Left ventricle myocardium inferior (tissue), 1 donor: ENCODE measurements at regions of chr1 and their contacts with region 1.

Region 1: GRCh38 chr1:56189946-56190792 is 389.2 kb downstream of the PLPP3 start:
- DNase-seq: no peak
- H3K4me3 ChIP-seq: no peak overlapping the region
- H3K27ac ChIP-seq: peak overlapping the region; percentile 71
- H3K4me1 ChIP-seq: peaks cover 26% of the 10 kb centered on the region
- H3K27me3 ChIP-seq: no peaks in the 10 kb centered on the region
- CTCF ChIP-seq: peak; percentile 63

Region 2: DNA sequence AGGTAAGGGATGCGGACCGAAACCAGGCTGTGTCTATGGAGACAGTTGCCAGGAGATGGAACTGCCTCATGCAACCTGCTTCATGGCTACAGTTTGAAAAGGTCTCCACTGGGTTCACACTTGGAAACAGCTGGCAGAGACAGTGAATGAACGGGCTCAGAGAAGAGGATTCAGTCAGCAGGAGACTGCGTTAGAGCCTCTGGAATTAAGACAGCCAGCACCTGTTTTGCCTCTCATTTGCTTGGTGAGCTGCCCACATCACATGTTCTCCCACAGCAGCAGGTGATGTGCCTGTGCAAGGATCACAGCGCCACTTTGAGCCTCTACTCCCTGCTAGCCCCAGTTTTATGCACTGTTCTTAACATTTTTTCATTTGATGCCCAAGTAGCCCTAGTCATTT is 68.2 kb after region 1 on chr1:
- intact Hi-C with region 1: no loop called
- DNase-seq: no peak
- H3K4me3 ChIP-seq: no peak overlapping the region
- H3K27ac ChIP-seq: no peak overlapping the region
- H3K4me1 ChIP-seq: peaks cover 41% of the 10 kb centered on the region
- H3K27me3 ChIP-seq: no peaks in the 10 kb centered on the region
- CTCF ChIP-seq: no peak

Region 3: DNA sequence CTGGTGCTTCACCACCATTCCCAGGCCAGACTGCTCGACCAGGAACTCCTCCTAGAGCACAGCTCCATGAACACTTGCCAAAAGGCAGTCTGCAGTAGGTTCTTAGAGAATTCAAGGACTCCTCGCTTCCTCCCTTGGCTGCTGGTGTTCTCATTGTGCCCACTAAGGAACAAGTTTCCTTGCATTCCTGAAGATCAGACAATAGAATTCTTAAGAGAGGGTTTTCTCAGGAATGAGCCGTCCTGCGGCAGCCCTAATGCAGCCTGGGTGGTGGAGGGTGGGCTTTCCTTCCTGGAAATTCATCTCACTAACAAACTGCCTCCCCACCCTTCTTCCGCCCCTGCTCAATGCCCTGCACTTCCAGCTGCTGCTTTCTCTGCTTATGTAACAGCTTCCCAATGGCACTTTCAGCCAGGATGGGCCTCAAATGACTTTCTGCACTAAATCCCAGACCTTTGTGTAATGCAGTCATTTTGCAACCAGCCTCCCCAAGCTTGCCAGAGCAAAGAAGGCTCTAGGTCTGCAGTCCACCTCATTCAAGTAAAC is 101.3 kb after region 1 on chr1:
- intact Hi-C with region 1: loop called (anchors 5 kb)
- DNase-seq: peak; percentile 62
- H3K4me3 ChIP-seq: no peak overlapping the region
- H3K27ac ChIP-seq: peak overlapping the region; percentile 76
- H3K4me1 ChIP-seq: peaks cover 39% of the 10 kb centered on the region
- H3K27me3 ChIP-seq: no peaks in the 10 kb centered on the region
- CTCF ChIP-seq: no peak

Region 4: GRCh38 chr1:56578963-56579875 is 389.1 kb after region 1 on chr1 and contains the start of gene PLPP3:
- intact Hi-C with region 1: loop called (anchors 10 kb)
- DNase-seq: peak; percentile 87
- H3K4me3 ChIP-seq: peak within 1 kb of the TSS; percentile 88
- H3K27ac ChIP-seq: peak within 1 kb of the TSS; percentile 97
- H3K4me1 ChIP-seq: peaks cover 59% of the 10 kb centered on the region
- H3K27me3 ChIP-seq: no peaks in the 10 kb centered on the region
- CTCF ChIP-seq: peak; percentile 59
- total RNA-seq, gene PLPP3: 101 TPM